SK-N-SH (cell line): ENCODE measurements at regions of chr9 and their contacts with region 1.

Region 1: DNA sequence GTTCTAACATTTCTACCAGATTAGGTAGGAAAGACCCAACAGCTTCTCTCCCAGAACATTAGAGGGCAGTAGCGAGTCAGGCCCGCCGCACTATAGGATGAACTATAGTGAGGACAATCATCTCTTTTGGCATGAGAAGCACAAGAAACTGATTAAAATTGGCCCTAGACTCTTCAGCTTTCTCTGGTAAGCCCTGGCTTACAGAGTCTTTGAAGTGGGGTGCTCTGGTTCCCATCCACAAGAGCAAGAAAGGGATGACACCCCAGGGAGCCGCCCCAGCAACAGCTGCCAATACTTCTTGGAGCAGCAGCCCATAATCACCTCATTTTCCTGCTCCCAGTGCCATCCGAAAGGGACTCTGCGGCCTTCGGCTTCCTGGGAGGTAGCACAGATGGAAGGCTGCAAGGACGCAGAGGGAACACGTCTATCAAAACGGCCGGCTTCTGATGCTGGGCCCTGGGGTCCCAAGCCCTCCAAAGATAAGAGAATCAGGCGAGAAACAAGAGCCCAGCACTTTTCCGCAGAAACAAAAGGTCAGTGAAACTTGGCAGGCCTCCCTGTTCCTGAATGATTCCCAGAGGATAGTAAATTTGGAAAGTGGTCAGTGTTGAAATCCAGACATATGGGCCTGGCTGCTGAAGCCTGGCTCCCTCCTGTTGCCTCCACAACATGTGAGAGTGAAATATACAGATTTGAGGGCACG is 69.3 kb downstream of the HSD17B3 start:
- DNase-seq: peak; percentile 70
- H3K4me3 ChIP-seq: no peak overlapping the region; a peak in 1 of 4 replicates
- H3K27ac ChIP-seq: no peak overlapping the region
- H3K4me1 ChIP-seq: no peaks in the 10 kb centered on the region
- H3K27me3 ChIP-seq: no peaks in the 10 kb centered on the region
- CTCF ChIP-seq: peak; percentile 93
- EP300 ChIP-seq: no peak
- RAD21 ChIP-seq: peak; percentile 75

Region 2: DNA sequence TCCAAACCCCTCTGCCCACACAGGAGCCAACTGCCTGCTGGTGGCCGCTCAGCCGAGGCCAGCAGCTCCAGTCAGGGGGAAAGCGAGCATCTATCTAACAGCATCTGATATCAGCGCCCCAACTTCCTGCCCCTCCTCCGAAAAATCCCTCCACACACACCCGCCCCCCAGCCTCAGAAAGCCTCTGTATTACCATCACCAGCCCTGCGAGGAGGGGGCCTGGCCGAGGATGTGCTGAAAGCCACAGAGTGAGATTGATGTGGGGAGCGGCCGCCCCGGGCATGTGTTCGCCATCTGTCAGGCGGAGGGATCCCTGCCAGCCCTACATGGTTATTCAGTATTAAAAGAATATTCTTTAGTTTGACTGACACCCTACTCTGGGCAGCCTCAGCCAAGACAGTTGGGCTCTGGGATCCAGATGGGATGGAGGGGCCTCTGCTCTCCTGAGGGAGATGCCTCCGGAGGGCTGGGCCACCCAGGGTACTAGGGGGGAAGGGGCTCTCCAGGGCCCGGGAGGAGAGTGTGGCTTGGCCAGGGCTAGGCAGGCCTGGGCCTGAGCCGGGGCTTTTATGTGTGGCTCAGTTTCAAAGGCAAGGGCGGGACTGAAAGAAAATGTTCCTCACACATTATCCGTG is 28.7 kb before region 1 on chr9:
- CTCF ChIA-PET with region 1: no interaction called
- POLR2A ChIA-PET with region 1: no interaction called
- DNase-seq: peak; percentile 89
- H3K4me3 ChIP-seq: no peak overlapping the region; a peak in 1 of 4 replicates
- H3K27ac ChIP-seq: peak overlapping the region in 1 of 2 experiments; percentile 72; a peak in 2 of 4 replicates
- H3K4me1 ChIP-seq: peaks cover 0 to 18% of the 10 kb centered on the region in 2 experiments; a peak in 1 of 4 replicates
- H3K27me3 ChIP-seq: peaks cover 16% of the 10 kb centered on the region
- CTCF ChIP-seq: no peak
- EP300 ChIP-seq: 0 out of 4 replicates have a peak, but pooled peaks of 1 of the 2 experiments have one; percentile 78
- RAD21 ChIP-seq: no peak

Region 3: DNA sequence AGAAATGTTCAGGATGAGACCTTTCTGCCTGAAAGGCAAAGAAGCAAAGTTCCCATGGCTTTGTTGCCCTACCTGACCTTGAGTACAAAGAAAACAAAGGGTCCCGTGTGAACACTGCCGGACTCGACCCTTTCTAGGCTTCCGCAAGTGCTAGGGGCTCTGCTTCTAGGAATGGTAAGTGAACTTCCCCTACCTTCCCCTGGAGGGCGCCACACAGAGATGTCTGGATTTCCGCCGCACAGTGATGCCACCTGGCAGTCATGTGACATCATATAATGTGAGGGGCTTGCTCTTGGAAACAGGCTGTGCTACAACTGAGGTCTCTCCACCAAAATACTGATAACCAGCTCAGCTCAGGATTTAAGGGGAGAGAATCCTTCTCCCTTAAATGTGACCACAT is 12.7 kb after region 1 on chr9:
- CTCF ChIA-PET with region 1: interaction called, 43 read pairs
- POLR2A ChIA-PET with region 1: no interaction called
- DNase-seq: no peak
- H3K4me3 ChIP-seq: no peak overlapping the region
- H3K27ac ChIP-seq: no peak overlapping the region
- H3K4me1 ChIP-seq: no peaks in the 10 kb centered on the region; a peak in 1 of 4 replicates
- H3K27me3 ChIP-seq: no peaks in the 10 kb centered on the region
- CTCF ChIP-seq: peak; percentile 27; the same call in 1 of the 2 replicates
- EP300 ChIP-seq: no peak
- RAD21 ChIP-seq: no peak

Region 4: DNA sequence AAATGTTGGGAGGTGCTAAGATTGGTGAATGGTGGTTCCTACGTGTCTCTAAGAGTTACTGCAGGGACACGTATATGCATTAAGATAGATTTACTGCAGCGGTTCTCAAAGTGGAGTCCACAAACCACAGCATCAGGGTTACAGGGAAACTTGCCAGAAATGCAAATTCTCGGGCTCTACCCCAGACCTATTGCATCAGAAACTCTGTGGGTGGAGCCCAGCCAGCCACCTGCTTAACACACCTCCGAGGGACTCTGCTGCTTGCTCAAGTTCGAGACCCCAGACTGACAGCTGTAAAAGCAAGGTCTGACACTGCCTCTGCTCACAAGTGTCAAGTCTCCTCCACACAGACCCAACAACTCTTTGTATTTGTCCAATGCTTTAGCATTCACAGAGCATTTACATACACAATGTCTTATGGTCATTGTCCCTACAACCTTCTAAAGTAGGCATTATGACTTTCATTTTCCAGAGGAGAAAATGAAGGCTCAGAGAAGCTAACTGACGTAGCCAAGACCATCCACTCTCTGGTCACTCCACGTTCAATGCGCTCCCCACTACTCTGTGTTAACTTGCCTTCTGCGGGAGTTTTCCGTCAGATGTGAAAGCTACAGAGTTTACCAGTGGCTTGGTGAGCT is 20.5 kb after region 1 on chr9:
- CTCF ChIA-PET with region 1: interaction called, 10 read pairs
- POLR2A ChIA-PET with region 1: no interaction called
- DNase-seq: no peak
- H3K4me3 ChIP-seq: no peak overlapping the region
- H3K27ac ChIP-seq: no peak overlapping the region
- H3K4me1 ChIP-seq: no peaks in the 10 kb centered on the region; a peak in 1 of 4 replicates
- H3K27me3 ChIP-seq: no peaks in the 10 kb centered on the region
- CTCF ChIP-seq: no peak
- EP300 ChIP-seq: no peak
- RAD21 ChIP-seq: no peak